AG04449 (cell line): ENCODE measurements at regions of chr16 and their contacts with region 1.

Region 1: DNA sequence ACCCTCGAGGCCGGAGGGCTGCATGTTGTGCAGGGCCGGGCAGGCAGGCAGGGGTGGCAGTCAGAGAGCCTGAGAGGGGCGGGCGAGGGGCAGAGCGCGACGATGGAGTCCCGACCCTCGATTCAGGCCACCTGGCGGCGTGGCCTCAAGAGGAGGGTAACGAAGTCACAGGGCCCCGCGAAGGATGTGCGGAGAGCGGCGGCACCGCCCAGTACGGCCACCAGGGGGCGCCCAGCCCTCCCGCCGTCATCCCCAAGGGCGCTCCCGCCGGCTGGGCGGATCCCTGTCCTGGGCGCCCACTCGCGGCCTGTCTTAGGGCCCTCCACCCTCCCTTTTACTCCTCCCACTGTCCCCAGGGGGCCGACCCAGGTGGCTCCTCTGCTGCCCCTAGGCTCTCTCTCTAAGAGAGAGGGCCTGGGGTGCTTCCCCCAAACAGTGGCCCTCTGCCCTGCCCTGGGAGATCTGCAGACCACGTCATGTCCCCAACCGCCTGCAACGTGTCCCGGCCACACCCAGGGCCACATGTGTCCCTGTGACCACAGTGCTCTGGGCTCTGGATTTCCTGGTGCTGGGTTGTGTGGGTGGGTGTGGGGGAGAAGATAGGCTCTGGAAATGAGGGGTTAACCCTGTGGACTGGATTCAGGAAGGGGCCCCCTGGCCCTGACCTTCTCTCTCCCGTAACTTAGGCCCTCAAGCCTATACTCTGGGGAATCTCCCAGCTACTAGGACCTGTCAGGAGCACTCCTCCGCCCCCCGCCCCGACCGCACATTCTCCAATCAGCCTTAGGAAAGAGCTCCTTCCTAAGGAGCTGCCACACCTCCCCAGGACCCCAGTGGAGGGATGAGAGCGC is 5.9 kb downstream of the DPEP2 start:
- DNase-seq: no peak
- H3K4me3 ChIP-seq: peak overlapping the region; percentile 12; the same call in 1 of the 2 replicates
- CTCF ChIP-seq: peak; percentile 97

Region 2: GRCh38 chr16:67806428-67807147 is 186.8 kb before region 1 on chr16 and contains the starts of genes RANBP10 and TSNAXIP1:
- CTCF ChIA-PET with region 1: no interaction called
- POLR2A ChIA-PET with region 1: no interaction called
- DNase-seq: peak; percentile 92
- H3K4me3 ChIP-seq: peak within 1 kb of the TSS; percentile 98
- CTCF ChIP-seq: no peak

Region 3: DNA sequence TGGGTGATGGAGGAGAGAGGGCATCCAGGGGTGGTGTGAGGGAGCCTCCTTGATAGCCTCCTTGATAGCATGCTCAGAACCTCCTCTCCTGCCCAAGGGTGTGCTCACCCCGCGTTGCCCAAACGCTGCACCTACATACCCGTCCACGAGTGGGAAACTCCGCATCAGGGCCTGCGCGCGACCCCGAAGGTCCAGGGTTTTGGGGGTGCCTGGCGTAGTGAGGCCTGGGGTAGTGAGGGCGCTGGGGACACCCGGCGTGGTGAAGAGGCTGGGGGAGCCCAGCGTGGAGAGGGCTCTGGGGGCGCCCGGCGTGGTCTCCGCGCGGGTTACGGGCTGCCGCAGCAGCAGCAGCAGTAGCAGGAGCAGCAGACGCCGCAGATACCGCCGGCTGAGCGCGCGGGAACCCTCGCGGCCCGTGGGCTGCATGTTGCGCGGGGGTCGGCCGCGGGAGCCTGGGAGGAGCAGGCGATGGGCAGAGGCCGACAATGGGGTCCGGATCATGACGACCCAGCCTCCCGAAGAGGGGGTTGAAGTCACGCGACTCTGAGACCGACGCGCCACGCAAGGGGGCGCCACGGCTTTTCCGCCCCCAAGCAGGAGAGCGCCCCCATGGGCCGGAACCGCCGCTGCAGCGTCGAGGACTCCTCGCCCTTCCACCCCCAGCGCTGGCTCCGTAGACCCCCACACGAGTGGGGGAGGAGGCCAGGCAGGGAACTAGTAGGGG is 13.3 kb before region 1 on chr16 and contains the start of gene DPEP3:
- CTCF ChIA-PET with region 1: interaction called, 51 read pairs
- POLR2A ChIA-PET with region 1: no interaction called
- DNase-seq: no peak
- H3K4me3 ChIP-seq: no peak within 1 kb of the TSS
- CTCF ChIP-seq: peak; percentile 19

Region 4: GRCh38 chr16:68005786-68006286 is 12.4 kb after region 1 on chr16:
- CTCF ChIA-PET with region 1: interaction called, 21 read pairs
- POLR2A ChIA-PET with region 1: no interaction called
- DNase-seq: no peak
- H3K4me3 ChIP-seq: no peak overlapping the region
- CTCF ChIP-seq: no peak